Left cardiac atrium (tissue), 4 donors: ENCODE measurements at regions of chr13 and their contacts with region 1.

Region 1: GRCh38 chr13:27826379-27827353 is 34.4 kb downstream of the GSX1 start:
- DNase-seq: peak; percentile 80
- ATAC-seq: peak; percentile 91 to 96

Region 2: DNA sequence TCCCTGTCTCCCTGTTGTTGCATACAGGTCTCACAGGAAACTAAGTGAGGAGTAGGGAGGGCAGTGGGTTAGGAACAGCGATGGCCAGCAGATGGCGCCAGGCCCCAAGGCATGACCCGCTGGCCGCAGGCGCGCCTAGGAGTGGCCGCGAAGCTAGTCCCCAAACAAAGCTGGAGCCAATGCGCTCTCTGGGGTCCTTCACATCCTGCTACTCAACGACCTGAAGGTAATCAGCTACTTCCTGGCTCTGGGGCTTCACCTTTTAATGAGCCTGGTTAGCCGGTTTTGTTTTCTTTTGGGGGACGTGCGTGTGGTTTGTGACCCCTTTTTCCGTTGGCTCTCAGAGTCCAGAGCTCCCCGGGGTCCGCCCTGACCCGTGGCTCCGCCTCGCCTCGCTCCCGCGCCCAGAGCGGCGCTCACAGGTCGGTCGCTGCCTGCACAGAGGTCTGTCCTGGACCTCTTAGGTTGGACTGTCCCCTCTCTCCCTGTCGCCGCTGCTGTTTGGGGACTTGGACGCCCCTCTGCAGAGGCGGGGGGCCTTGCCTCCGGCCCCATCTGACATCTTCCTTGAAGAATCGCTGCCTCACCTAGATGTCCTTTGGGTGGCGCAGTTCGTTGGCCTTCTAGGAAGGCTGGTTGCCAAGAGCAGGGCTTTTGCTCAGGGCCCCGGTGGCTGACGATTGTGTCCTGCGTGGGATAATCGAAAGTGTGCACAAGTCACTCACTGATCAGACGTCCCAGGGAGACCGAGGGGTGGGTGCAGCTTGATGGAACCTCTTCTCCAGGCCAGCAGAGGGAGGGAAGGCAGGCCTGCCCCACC is 464.4 kb before region 1 on chr13:
- intact Hi-C with region 1: loop called in 1 of 2 experiments (anchors 5 kb)
- DNase-seq: peak; percentile 89
- ATAC-seq: peak; percentile 96 to 97

Region 3: GRCh38 chr13:27523346-27524073 is 303.2 kb before region 1 on chr13:
- intact Hi-C with region 1: loop called in 1 of 2 experiments (anchors 10 kb)
- DNase-seq: no peak
- ATAC-seq: peak in 1 of 2 donors; percentile 34

Region 4: GRCh38 chr13:27691207-27691606 is 135.5 kb before region 1 on chr13:
- intact Hi-C with region 1: no loop called
- DNase-seq: no peak
- ATAC-seq: no peak

Region 5: DNA sequence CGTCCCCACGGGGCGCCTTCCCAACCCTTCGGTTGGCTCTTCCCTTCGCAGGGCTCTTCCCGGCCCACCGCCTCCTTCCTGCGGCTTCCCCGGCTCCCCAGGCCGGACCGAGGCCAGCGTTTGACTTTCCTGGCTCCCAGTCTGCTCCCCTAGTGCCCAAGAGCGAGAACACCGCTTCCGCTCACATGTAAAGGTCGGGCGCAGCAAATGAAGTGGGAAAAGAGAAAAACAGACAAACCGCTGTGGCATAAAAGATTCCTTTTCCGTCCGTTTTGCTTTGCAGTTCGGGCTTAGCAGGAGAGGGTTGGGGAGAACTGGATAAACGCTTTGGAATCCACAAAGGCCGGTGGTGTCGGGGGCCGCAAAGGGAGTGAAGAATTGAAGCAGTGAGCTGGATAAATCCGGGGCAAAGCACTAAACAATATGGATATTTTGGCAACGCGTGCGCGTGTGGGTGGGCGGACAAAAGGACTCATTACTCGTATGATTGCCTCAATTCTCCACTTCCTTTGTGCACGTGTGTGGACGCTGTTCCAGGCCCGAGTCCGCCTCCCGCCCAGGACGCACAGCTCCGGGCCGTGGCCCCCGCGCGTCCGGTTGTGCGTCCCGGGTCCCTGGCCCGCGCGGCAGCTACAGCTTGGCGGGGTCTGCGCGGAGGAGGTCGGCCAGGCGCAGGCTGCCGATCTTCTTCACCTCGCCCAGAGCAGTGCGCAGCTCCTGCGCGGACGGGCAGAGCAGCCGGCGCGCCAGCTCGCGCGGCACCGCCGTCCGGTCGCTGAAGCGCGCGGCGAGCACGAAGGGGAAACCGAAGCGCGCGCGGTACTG is 151.0 kb after region 1 on chr13:
- intact Hi-C with region 1: loop called in 1 of 2 experiments (anchors 5 kb)
- DNase-seq: no peak
- ATAC-seq: no peak